GM13976 (cell line): ENCODE measurements at regions of chr19 and their contacts with region 1.

Region 1: GRCh38 chr19:19643158-19644053 is at the start of gene GMIP:
- DNase-seq: peak; percentile 97
- CTCF ChIP-seq: peak; percentile 88

Region 2: GRCh38 chr19:19361075-19361594 is 282.3 kb before region 1 on chr19:
- in situ Hi-C with region 1: loop called (anchors 25 kb)
- DNase-seq: peak; percentile 86
- CTCF ChIP-seq: peak; percentile 73

Region 3: GRCh38 chr19:19538061-19538784 is 105.2 kb before region 1 on chr19 and contains the start of gene CILP2:
- in situ Hi-C with region 1: loop called (anchors 5 kb)
- DNase-seq: peak; percentile 76
- CTCF ChIP-seq: no peak

Region 4: DNA sequence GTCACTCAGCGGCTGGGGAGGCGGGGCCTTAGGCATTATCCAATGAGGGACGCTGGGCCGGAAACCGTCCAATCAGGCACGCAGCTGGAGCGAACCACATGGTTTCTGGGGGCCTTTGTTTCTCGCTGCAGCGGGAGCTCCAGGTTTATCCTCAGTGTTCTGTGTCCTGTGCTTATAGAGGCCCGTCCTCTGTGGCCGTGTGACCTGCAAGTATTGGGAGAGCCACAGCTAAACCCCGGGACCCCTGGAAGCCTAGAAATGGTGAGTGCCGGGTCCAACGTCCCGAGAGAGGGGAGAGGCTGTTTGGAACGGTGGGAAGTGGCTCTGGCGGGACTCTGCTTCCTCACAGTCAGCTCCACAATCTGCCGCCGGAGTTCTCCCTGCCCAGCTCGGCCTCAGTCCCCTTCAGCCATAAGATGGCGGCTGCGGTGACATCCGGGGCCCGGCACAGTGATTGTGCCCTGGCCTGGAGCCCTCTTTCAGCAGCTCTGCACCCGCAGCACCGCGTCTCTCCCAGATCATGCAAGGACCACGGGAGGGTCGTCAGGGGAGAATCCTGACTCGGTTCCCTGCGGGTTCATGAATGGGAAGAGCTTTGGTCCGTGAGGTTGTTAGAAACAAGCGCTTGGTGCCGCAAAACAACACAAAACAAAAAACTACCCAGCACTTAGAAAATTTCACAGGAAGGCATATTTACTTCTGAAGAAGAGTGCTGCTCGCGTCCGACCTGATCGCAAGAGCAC is 222.5 kb after region 1 on chr19 and contains the start of gene ZNF253:
- in situ Hi-C with region 1: no loop called
- DNase-seq: peak; percentile 91
- CTCF ChIP-seq: no peak